Activated T-helper 1 cell treated with anti-CD3 and anti-CD28 coated beads, Interleukin-12 subunit alpha, Interleukin-12 subunit beta, Interleukin-2, Interleukin-4 antibody, amounts not matched to agents 30 ng/mL and 10 ng/mL and 1 ng/mL, durations not matched to agents 14 hours and 24 hours and 36 hours (primary cell): ENCODE measurements at regions of chr2 and their contacts with region 1.

Region 1: DNA sequence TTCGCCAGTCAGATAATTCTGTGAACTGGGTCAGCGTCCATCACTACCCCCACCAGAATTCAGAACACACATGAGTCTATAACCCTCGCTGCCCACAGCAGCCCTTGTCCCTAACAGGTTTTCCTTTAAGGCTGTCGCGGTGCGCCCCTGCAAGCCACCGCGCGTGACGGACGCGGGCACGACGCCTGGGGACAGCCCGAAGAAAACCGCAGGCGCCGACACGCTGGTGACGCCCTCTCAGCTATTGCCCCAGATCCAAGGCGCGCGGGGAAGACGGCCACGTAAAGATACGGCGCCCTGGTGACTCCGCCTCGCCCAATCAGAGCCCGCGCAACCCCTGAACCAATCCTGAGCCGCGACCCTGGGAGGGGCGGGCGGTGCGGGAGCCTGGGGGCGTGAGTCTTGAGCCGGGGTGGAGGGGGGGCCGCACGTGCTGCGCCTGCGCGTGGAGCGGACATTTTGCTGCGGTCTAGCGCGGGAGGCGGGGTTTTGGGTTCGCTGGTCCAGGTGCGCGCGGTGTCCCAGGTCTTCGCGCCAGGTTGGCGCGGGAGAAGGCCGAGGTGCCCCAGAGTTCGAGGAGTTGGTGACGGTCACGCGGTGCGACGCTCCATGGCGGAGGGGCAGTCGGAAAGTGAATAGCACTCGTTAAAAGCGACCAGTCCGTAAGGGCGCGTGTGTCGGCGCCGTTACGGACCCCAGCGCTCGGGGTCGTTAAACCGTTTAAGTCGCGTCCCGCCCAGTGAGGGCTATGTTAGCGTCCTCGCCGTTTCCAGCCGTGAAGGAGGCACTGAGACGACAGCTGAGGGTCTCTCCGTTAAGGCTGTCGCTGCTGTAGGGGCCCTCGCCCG is 15.9 kb downstream of the NMUR1 start:
- DNase-seq: peak; percentile 99
- H3K4me3 Mint-ChIP-seq: peak overlapping the region; percentile 90
- H3K27ac Mint-ChIP-seq: peak overlapping the region; percentile 92
- H3K4me1 Mint-ChIP-seq: peaks cover 25% of the 10 kb centered on the region
- H3K27me3 Mint-ChIP-seq: peaks cover 9% of the 10 kb centered on the region

Region 2: DNA sequence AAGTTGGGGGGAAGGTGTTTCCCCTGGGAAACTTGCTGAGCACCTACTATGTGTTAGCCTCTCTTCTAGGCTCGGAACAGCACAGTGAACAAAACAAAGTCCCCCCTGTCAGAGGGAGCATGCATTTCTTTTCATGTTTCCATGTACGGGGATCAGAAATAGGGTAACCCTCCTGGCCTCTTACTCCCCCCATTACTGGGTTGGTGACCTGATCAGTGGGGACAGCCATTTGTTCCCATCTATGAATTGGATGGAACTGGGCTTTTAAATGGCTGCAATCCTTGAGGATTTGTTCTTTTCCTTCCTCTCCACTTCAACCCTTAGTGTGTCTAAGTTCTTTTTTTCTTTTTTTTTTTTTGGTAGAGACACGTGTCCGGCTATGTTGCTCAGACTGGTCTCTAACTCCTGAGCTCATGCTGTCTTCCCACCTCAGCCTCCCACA is 63.8 kb before region 1 on chr2:
- intact Hi-C with region 1: no loop called
- DNase-seq: no peak
- H3K4me3 Mint-ChIP-seq: no peak overlapping the region
- H3K27ac Mint-ChIP-seq: no peak overlapping the region
- H3K4me1 Mint-ChIP-seq: peaks cover 6% of the 10 kb centered on the region
- H3K27me3 Mint-ChIP-seq: no peaks in the 10 kb centered on the region

Region 3: DNA sequence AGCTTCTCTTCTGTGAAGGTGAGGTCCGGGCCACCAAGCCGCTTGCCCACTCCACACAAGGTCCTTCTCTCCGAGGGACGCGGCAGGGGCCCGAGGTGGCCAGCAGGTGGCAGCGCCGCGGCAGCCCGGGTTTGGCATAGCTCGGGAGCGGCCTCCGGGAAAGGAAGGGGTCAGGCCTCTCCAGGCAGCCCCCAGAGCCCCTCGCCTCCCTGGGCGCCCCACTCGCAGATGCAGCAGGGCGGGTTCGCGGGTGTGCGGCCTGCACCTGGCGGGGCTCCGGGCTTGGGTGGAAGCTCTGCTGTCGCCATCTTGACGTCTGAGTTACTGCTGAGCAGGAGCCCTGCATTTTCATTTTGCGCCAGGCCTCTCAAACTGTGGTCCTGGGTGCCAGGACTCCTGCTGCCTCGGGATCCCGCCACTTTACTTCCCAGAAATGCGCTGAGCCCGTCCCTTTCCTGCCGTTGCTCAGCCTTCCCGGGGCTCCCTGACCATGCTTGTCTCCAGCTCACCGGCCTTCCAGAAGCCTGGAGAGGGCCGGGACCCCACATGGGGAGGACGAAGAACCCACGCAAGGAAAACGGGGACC is 31.4 kb before region 1 on chr2:
- intact Hi-C with region 1: loop called (anchors 1 kb)
- DNase-seq: peak; percentile 66
- H3K4me3 Mint-ChIP-seq: peak overlapping the region; percentile 77
- H3K27ac Mint-ChIP-seq: peak overlapping the region; percentile 86
- H3K4me1 Mint-ChIP-seq: peaks cover 6% of the 10 kb centered on the region
- H3K27me3 Mint-ChIP-seq: peaks cover 2% of the 10 kb centered on the region

Region 4: DNA sequence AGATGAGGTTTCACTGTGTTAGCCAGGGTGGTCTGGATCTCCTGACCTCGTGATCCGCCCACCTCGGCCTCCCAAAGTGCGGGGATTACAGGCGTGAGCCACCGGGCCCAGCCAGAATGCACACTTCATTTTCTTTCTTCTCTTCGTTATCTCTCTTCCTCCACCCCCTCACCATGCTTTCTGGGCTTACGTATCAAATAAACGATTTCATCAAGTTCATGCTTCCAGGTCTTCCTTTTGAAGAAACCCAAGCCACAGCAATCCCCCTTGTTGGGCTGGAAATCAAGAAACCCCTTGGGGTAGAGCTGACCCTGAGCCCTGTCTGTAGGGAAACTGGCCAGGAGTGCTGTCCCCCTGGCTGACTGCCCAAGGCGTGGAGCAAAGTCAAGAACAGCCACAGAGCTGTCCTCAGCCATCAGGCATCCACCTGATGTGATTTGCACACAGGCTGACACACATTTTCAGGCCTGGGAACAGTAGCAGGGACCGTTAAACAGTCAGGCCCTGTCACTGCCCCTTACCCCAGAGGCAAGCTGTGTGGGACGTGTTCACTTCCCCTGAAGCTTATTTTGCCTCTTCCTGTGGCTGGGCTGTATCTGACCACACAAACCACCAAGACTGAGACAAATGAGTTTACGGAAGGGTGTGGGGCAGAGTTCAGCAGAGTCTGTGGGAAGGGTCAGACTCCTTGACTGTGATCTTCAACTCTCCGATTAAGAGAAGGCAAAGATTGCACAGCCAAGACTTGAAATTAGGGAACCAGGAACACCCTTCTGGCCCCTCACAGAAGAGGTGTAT is 31.0 kb after region 1 on chr2:
- intact Hi-C with region 1: loop called (anchors 1 kb)
- DNase-seq: peak; percentile 76
- H3K4me3 Mint-ChIP-seq: peak overlapping the region; percentile 79
- H3K27ac Mint-ChIP-seq: peak overlapping the region; percentile 96
- H3K4me1 Mint-ChIP-seq: peaks cover 45% of the 10 kb centered on the region
- H3K27me3 Mint-ChIP-seq: peaks cover 5% of the 10 kb centered on the region

Region 5: DNA sequence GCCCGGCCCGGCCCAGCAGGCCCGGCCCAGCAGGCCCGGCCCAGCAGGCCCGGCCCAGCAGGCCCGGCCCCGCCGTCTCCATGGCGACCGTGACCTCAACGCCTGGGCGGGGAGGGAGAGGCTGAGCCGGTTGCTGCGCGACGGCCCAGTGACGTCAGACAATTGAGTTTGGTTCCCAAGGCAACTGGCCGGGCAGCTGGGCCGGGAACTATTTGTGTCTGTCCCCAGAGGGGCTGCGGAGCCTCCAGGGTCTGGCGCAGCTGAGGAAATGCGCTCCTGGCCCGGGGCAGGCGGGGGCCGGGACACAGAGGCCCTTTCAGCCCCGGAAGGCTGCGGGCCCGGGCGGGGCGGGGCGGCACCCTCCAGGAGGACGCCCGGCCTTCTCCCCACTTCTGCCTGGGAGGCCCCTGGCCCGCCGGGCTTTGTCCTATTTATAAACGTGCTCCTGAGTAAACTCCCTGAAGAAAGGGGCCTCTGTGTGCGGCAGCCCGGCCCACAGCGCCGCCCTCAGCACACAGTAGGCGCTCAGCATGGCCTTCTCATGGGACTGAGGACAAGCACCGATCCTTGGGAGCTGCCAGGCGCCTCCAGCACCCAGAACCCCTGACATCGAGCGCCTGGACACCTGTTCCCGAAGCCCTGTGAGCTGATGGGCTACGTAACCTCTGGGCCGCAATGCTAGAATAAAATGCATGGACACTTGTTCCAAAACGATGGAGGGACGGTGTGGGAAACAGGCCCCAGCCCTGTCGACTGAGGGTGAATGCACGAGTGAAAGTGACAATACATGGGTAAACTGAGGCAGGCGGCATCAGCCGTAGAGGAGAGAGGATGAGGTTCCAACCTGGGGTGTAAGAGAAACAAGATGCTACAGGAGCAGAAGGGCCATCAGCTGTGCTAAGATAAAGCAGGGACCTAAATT is 90.6 kb after region 1 on chr2:
- intact Hi-C with region 1: loop called (anchors 1 kb)
- DNase-seq: peak; percentile 95
- H3K4me3 Mint-ChIP-seq: peak overlapping the region; percentile 60
- H3K27ac Mint-ChIP-seq: peak overlapping the region; percentile 76
- H3K4me1 Mint-ChIP-seq: peaks cover 19% of the 10 kb centered on the region
- H3K27me3 Mint-ChIP-seq: peaks cover 15% of the 10 kb centered on the region

Region 6: GRCh38 chr2:231662028-231662810 is 147.9 kb after region 1 on chr2:
- intact Hi-C with region 1: loop called (anchors 1 kb)
- DNase-seq: peak; percentile 98
- H3K4me3 Mint-ChIP-seq: peak overlapping the region; percentile 74
- H3K27ac Mint-ChIP-seq: peak overlapping the region; percentile 96
- H3K4me1 Mint-ChIP-seq: peaks cover 25% of the 10 kb centered on the region
- H3K27me3 Mint-ChIP-seq: no peaks in the 10 kb centered on the region

Region 7: DNA sequence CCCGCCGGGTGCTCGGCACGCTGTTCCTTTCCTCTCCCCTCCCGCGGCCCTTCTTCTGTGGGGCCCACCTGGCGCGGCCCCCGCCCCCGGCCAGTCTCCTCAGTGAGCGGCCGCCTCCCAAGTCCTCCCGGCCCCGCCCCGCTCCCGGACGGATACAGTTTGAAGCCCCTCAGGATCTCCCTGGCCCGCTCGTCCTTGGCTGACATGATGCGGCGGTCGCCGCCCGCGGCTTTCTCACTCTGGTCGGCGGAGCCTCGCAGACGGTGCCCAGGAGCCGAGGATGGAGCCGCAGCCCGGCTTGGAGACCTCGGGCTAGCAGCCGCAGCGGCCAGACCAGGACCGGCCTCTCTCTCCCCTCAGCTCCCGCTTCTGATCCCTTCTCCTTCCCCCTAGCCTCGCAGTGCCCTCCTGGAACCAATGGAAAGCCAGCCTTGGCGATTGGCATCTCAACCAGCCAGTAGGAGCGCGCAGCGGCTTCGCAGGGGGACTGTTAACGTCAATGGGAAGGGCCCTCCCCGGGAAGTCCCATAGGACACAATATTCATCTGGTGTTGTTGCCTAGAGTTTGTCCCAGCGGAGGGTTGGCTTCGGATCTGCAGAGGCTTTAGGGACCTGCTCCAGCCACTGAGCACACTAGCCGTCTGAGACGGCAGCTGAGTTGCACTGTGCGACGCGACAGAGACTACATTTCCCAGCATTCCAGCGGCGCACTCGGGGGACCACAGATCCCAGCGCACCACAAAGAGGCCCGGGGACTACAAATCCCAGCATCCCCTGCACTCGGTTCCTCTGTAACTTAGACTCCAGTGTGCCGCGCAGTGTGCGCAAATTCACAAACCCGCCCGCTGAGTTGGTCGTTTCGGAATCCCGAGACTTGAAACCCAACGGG is 266.8 kb after region 1 on chr2 and contains the start of gene PDE6D:
- intact Hi-C with region 1: loop called (anchors 1 kb)
- DNase-seq: peak; percentile 98
- H3K4me3 Mint-ChIP-seq: peak within 1 kb of the TSS; percentile 93
- H3K27ac Mint-ChIP-seq: peak within 1 kb of the TSS; percentile 94
- H3K4me1 Mint-ChIP-seq: peaks cover 56% of the 10 kb centered on the region
- H3K27me3 Mint-ChIP-seq: no peaks in the 10 kb centered on the region
- total RNA-seq, gene PDE6D: 31.0 and 31.9 TPM in 2 replicates

Region 8: GRCh38 chr2:232502911-232503808 is 988.8 kb after region 1 on chr2:
- intact Hi-C with region 1: no loop called
- DNase-seq: no peak
- H3K4me3 Mint-ChIP-seq: peak overlapping the region; percentile 45
- H3K27ac Mint-ChIP-seq: no peak overlapping the region
- H3K4me1 Mint-ChIP-seq: peaks cover 5% of the 10 kb centered on the region
- H3K27me3 Mint-ChIP-seq: peaks cover 50% of the 10 kb centered on the region

Region 9: DNA sequence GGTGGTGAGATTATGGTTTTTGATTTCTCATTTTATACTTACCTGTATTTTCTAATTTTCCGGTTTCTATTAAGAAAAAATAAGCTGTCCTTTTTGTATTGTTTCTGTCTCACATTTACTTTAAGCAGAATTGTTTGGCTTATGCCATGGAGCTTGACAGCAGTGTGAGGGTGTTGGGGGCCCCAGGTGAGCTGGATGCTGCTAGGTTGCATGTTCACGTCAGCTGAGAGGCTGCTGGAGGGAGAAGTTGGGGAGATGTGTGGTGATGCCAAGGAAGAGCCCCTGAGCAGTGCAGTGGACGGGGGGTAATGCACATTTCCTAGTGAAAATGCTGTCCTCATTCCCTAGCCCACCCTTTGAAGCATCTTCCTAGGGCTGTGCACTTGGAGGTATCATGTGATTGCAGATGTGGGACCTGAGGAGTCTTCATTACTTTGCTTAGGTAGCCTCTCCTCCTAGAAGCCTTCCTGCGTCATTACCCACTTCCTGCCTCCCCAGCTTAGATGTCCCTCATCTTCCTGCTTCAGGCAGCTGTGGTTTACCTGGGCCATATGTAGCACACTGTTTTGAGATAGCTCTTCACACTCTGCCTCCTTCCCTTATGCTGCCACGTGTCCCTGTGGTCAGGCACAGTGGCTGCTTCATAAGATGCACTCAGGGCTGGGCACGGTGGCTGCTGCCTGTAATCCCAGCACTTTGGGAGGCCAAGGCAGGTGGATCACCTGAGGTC is 1753.4 kb after region 1 on chr2:
- intact Hi-C with region 1: no loop called
- DNase-seq: peak; percentile 83
- H3K4me3 Mint-ChIP-seq: peak overlapping the region; percentile 54
- H3K27ac Mint-ChIP-seq: peak overlapping the region; percentile 95
- H3K4me1 Mint-ChIP-seq: peaks cover 76% of the 10 kb centered on the region
- H3K27me3 Mint-ChIP-seq: no peaks in the 10 kb centered on the region